A549 (cell line): ENCODE measurements at regions of chr20 and their contacts with region 1.

Region 1: GRCh38 chr20:19784511-19785172 is 26.6 kb downstream of the RIN2 start:
- DNase-seq: peak; percentile 68 to 92
- ATAC-seq: peak; percentile 94 to 95
- H3K4me3 ChIP-seq: no peak overlapping the region
- H3K27ac ChIP-seq: peak overlapping the region; percentile 87 to 89
- H3K4me1 ChIP-seq: peaks cover 35% of the 10 kb centered on the region
- CTCF ChIP-seq: peak; percentile 97
- EP300 ChIP-seq: no peak; a peak in 1 of 5 replicates
- POLR2A ChIP-seq: peak; percentile 21; the same call in 1 of the 2 replicates
- RAD21 ChIP-seq: peak; percentile 97 to 99

Region 2: DNA sequence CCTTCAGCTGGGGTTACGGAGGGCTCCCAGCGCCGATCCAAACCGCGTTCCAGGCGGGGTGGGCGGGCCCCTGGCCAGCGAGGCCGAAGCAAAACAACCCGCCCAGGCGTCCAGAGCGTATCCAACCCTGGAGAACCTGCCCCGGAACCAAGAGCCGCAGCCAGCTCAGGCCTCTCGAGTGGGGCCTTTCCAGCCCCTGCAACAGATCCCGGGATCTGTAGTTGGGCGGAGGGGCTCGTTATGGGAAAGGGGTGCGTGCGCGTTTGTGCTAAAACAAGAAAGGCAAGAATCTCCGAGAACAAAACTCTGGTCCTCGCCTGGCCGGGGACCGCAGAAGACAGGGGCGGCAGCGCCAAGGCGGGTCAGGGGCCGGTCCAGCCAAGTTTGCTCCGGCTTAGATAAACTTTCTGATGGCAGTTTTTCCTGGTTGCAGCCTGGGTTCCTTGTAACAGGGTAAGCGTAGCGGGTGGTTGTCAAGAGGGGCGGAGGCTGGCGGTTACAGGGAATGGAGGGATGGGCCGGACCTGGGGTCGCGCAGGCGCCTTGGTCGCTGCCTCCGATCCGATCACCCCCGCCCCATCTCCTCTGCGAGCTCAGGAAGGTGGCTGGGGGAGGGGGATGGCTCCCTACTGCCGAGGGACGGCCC is 27.0 kb before region 1 on chr20:
- CTCF ChIA-PET with region 1: interaction called, 10 read pairs
- POLR2A ChIA-PET with region 1: interaction called, 12 read pairs
- DNase-seq: peak; percentile 96 to 98
- ATAC-seq: peak; percentile 85 to 93
- H3K4me3 ChIP-seq: peak overlapping the region; percentile 72
- H3K27ac ChIP-seq: peak overlapping the region; percentile 85 to 89
- H3K4me1 ChIP-seq: peaks cover 28% of the 10 kb centered on the region
- CTCF ChIP-seq: no peak
- EP300 ChIP-seq: no peak
- POLR2A ChIP-seq: peak; percentile 47
- RAD21 ChIP-seq: peak in 1 of 2 experiments; percentile 11; a peak in 1 of 5 replicates

Region 3: DNA sequence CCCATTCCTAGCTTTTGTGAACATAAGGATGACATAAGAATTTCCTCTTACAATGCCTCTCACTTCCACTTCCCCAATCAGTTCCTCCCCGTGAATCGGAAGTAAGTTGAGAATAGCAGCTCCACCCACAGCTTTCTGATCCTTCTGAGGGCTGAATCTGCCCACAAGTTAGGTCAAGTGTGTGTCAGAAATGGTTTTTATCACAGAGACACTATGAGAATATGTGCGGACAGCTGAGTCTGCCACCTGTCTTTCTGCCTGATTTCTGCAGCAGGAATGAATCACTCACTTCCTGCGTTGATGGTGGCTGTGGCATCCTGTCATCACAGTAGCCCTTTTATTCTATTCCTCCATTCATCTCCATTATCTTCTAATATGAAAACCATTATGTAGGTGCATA is 43.6 kb after region 1 on chr20:
- CTCF ChIA-PET with region 1: interaction called, 22 read pairs
- POLR2A ChIA-PET with region 1: no interaction called
- DNase-seq: peak; percentile 64 to 71
- ATAC-seq: peak; percentile 80 to 88
- H3K4me3 ChIP-seq: no peak overlapping the region
- H3K27ac ChIP-seq: peak overlapping the region; percentile 31 to 75; a peak in 4 of 6 replicates
- H3K4me1 ChIP-seq: peaks cover 21% of the 10 kb centered on the region
- CTCF ChIP-seq: peak; percentile 56
- EP300 ChIP-seq: no peak
- POLR2A ChIP-seq: no peak
- RAD21 ChIP-seq: peak; percentile 45 to 53; a peak in 2 of 5 replicates

Region 4: DNA sequence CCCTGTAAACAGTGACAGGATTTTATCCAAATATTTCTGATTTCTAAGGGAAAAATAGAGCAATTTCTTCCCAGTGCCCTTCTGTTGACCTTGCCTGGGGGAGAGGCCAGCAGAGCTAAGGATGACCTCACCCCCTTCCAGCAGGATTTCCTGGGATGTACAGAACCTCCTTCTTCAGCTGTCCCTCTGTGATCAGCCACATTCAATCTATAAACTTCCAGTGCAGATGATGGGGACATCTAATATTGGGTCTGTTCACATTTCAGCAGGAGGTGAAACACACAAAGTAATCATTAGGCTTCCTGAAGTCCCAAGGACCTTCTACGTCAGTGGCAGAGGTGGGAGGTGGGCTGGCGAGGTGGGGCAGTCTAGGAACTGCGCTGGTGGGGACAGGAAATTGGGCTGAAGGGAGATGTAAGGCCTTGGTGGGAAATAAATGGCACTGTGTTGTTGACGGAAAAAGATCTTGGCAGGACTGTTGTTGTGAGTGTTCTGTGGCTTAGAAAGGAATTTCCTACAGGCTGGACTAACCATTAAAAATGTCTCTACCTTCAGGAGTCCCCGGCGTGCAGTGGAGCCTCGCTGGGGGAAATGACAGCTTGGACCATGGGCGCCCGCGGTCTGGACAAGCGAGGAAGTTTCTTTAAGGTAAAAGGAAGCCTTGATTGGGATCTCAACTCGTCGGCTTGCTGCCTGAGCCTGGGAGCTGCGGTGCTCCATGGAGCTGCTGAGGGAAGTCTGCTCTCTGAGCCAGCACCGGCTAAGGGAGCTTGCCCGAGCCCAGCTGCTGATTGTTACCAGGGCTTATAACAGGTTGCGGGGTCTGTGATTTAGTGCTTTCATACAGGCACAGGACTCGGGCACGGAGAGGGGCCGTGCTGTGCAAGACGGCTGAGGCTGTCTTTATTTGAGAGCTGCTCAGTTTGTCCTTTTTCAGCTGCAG is 104.6 kb after region 1 on chr20:
- CTCF ChIA-PET with region 1: interaction called, 130 read pairs
- POLR2A ChIA-PET with region 1: interaction called, 23 read pairs
- DNase-seq: peak in 1 of 2 experiments; percentile 48
- ATAC-seq: 0 out of 6 replicates have a peak, but pooled peaks of 1 of the 2 experiments have one; percentile 9
- H3K4me3 ChIP-seq: peak overlapping the region; percentile 31; the same call in 2 of the 3 replicates
- H3K27ac ChIP-seq: peak overlapping the region; percentile 92 to 97
- H3K4me1 ChIP-seq: peaks cover 61% of the 10 kb centered on the region
- CTCF ChIP-seq: no peak
- EP300 ChIP-seq: no peak
- POLR2A ChIP-seq: no peak
- RAD21 ChIP-seq: no peak

Region 5: DNA sequence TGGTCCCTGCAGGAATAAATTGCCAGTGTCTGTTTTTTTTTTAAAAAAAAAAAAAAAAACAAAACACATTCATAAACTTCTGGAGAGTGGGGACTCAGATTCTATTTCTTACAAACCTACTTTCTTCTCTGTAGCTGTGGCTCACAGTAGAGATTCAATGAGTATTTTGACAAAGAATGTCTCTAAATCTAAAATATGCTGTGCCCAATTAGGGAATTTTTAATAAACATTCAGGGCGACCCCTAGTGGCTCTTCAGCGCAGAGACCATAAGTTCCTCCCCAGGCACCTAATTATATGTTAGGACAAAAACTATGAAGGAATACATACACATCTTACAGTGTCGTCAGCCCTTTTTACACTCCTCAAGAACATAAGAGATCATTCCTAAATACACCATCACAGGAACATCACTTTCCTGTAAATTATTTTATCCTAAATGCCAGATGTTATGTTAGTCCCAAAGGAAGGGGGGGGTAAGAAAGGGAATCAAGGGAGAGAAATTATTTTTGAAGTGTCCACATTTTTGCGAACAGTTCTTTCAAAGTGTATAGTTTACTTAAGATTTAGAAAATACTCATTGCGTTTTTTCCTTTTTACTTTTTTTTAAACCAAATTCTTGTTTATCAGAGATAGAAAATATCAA is 210.7 kb after region 1 on chr20:
- CTCF ChIA-PET with region 1: interaction called, 80 read pairs
- POLR2A ChIA-PET with region 1: interaction called, 6 read pairs
- DNase-seq: peak; percentile 55 to 61
- ATAC-seq: no peak
- H3K4me3 ChIP-seq: no peak overlapping the region
- H3K27ac ChIP-seq: peak overlapping the region; percentile 90 to 93
- H3K4me1 ChIP-seq: peaks cover 51% of the 10 kb centered on the region
- CTCF ChIP-seq: peak; percentile 94
- EP300 ChIP-seq: no peak
- POLR2A ChIP-seq: no peak
- RAD21 ChIP-seq: peak; percentile 92 to 93